CD4-positive, alpha-beta T cell (primary cell): ENCODE measurements at regions of chr15 and their contacts with region 1.

Region 1: DNA sequence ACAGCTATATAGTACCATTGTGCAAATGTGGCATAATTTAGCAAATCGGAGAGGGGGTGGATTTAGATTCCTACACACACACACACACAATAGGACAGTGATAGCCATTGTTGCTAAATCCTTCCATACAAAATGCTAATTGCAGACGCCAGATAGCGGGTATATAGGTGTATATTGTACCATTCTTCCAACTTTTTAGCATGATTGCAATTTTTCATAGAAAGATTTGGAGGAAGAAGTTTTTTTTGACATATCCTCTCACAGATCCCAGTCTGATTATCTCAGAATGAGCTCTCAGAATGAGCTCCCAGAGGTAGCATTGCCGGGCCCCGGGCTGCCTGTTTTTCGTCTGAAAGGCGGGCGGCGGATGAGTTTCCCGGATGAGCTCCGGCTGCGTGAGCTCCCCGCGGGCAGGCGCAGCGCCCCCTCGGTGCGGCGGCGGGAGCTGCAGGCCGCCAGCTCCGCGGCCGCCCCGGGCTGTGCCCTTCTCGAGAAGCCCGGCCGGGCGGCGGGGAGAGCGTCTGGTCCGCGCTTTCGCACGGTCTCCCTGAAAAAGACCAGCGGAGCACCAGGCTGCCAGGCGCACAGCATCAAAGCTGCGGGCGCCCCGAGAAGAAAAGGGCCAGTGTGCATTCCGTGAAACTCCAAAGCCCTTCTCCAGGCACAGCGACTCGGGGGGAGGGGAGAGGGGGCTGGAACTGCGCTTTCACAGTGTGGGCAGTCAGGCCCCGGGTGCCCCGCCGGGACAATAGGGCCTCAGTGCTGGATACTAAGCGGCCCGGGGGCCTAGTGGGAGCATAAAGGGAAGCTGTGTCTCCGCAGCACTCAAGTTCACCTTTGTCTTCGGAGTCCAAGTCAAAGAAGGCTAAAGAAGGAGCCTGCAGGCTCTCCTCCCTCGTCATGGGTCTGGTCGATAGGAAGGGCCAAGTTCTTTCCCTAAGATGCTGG is 12.0 kb upstream of the SHC4 start:
- DNase-seq: peak; percentile 46 to 86 (median 65)
- ATAC-seq: peak; percentile 99
- H3K4me3 ChIP-seq: peak overlapping the region; percentile 60
- H3K4me3 Mint-ChIP-seq: peak overlapping the region; percentile 62
- H3K27ac ChIP-seq: no peak overlapping the region
- H3K27ac Mint-ChIP-seq: no peak overlapping the region
- H3K4me1 ChIP-seq: peaks cover 6% of the 10 kb centered on the region
- H3K4me1 Mint-ChIP-seq: peaks cover 4% of the 10 kb centered on the region
- H3K27me3 ChIP-seq: peaks cover 8% of the 10 kb centered on the region in 2 experiments
- H3K27me3 Mint-ChIP-seq: peaks cover 38% of the 10 kb centered on the region
- CTCF ChIP-seq: peak; percentile 88

Region 2: GRCh38 chr15:48877630-48878595 is 97.8 kb before region 1 on chr15 and contains the start of gene EID1:
- CTCF ChIA-PET with region 1: interaction called, 15 read pairs
- POLR2A ChIA-PET with region 1: interaction called, 14 read pairs
- intact Hi-C with region 1: no loop called
- DNase-seq: peak; percentile 84 to 98 (median 90)
- ATAC-seq: peak; percentile 93
- H3K4me3 ChIP-seq: peak within 1 kb of the TSS; percentile 92
- H3K4me3 Mint-ChIP-seq: peak within 1 kb of the TSS; percentile 94
- H3K27ac ChIP-seq: peak within 1 kb of the TSS; percentile 68 to 78
- H3K27ac Mint-ChIP-seq: peak within 1 kb of the TSS; percentile 95
- H3K4me1 ChIP-seq: peaks cover 7% of the 10 kb centered on the region
- H3K4me1 Mint-ChIP-seq: peaks cover 23% of the 10 kb centered on the region
- H3K27me3 ChIP-seq: no peaks in the 10 kb centered on the region
- H3K27me3 Mint-ChIP-seq: peaks cover 25% of the 10 kb centered on the region
- CTCF ChIP-seq: no peak
- total RNA-seq, gene EID1: 41.0 to 45.3 TPM

Region 3: DNA sequence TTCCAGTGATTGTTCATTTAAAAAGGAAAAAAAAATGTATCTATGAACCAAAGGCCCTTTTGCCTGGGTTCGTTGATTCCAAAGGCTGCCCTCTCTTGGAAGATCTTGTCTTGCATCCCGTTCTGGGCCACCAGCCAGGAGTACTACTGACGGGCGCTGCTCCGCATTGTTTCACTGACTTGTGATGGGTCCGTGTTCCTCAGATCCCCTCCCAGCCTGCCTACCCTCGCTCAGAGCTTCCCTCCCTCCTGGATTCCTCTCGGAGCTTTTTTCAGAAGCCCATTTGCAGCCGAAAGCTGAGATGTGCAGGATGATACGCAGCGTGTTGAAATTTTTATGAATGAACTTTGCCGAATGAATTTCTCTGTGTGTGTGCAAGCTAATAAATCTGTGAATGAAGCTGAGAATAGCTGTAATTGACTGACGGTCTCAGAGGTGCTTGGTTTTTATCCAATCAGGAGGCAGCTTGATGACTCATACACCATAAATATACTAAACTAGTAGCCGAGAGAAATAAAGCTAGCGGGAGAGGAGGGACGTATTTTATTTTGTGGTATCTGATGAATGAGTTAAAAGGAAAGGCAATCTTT is 12.1 kb before region 1 on chr15 and contains the start of gene SHC4:
- CTCF ChIA-PET with region 1: interaction called, 20 read pairs
- POLR2A ChIA-PET with region 1: interaction called, 13 read pairs
- intact Hi-C with region 1: no loop called
- DNase-seq: peak in 3 of 14 experiments; percentile 43 to 52 (median 47)
- ATAC-seq: peak; percentile 65
- H3K4me3 ChIP-seq: peak within 1 kb of the TSS; percentile 47
- H3K4me3 Mint-ChIP-seq: peak within 1 kb of the TSS; percentile 85
- H3K27ac ChIP-seq: no peak within 1 kb of the TSS
- H3K27ac Mint-ChIP-seq: no peak within 1 kb of the TSS
- H3K4me1 ChIP-seq: peaks cover 30% of the 10 kb centered on the region
- H3K4me1 Mint-ChIP-seq: peaks cover 20% of the 10 kb centered on the region
- H3K27me3 ChIP-seq: peaks cover 34 to 39% of the 10 kb centered on the region in 2 experiments
- H3K27me3 Mint-ChIP-seq: peaks cover 64% of the 10 kb centered on the region
- CTCF ChIP-seq: no peak
- total RNA-seq, gene SHC4: not detected

Region 4: DNA sequence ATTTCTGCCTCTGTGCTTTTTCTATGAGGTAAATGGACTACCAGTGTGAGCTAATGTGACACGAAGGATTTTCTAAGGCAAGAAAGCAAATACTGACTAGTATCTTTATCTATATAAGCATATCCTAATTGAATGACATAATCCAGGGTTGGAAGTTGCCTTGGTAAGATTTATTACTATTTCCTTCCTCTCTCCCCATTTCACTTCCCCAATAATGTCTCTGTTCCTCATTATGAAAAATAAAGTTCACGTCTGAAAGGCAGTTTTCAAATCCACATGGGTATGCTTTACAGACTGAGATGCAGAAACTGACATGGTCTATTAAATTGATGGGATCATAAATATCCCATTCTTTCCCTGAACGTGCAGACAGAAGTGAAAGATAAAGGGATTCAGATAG is 731.1 kb after region 1 on chr15:
- CTCF ChIA-PET with region 1: no interaction called
- POLR2A ChIA-PET with region 1: no interaction called
- intact Hi-C with region 1: no loop called
- DNase-seq: peak in 3 of 14 experiments; percentile 11 to 14 (median 13)
- ATAC-seq: no peak
- H3K4me3 ChIP-seq: no peak overlapping the region
- H3K4me3 Mint-ChIP-seq: no peak overlapping the region
- H3K27ac ChIP-seq: no peak overlapping the region
- H3K27ac Mint-ChIP-seq: no peak overlapping the region
- H3K4me1 ChIP-seq: no peaks in the 10 kb centered on the region
- H3K4me1 Mint-ChIP-seq: no peaks in the 10 kb centered on the region
- H3K27me3 ChIP-seq: no peaks in the 10 kb centered on the region
- H3K27me3 Mint-ChIP-seq: no peaks in the 10 kb centered on the region
- CTCF ChIP-seq: no peak